Naive thymus-derived CD8-positive, alpha-beta T cell (primary cell): ENCODE measurements at regions of chr9 and their contacts with region 1.

Region 1: GRCh38 chr9:36487482-36488388 is 85.0 kb upstream of the MELK start:
- DNase-seq: peak; percentile 84 to 94 (median 90)
- ATAC-seq: peak; percentile 87 to 88
- H3K4me3 Mint-ChIP-seq: peak overlapping the region; percentile 85 to 98 (median 94)
- H3K27ac Mint-ChIP-seq: peak overlapping the region; percentile 96 to 100 (median 99)
- H3K4me1 Mint-ChIP-seq: peaks cover 37 to 75% (median 69%) of the 10 kb centered on the region in 4 donors
- H3K27me3 Mint-ChIP-seq: no peaks in the 10 kb centered on the region

Region 2: DNA sequence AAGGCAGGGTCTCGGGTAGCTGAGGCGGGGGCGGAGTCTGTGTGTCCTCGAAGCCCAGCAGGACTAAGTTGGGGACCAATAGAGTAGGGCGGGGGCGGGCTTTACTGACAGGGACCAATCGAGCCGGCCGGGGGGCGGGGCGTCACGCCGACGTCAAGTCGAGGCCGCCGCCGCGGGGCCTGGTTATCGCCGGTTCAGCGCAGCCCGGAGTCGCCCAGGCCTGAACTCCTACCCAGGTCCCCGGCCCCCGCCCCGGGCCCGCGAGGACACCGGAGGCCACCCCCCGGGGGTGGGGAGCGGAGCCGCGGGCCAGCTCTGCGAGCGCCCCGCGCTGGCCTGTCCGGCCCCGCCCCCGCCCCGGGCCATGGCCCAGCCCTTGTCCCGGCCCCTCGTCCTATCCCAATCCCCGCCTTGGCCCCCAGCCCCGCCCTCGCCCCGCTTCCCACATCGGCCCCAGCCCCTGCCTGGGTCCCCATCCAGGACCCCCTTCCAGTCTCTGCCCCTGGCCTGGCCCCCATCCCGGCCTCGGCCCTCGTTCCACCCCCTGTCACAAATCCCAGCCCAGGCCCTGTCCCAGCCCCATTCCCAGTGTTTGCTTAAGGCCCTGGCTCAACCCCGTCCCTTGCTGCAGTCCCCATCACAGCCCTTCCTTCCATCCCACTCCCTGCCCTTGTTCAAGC is 658.5 kb before region 1 on chr9 and contains the start of gene TMEM8B:
- POLR2A ChIA-PET with region 1: no interaction called
- DNase-seq: peak; percentile 83 to 97 (median 90)
- ATAC-seq: peak; percentile 94
- H3K4me3 Mint-ChIP-seq: peak within 1 kb of the TSS; percentile 86 to 100 (median 96)
- H3K27ac Mint-ChIP-seq: peak within 1 kb of the TSS; percentile 81 to 100 (median 96)
- H3K4me1 Mint-ChIP-seq: peaks cover 32 to 63% (median 44%) of the 10 kb centered on the region in 4 donors
- H3K27me3 Mint-ChIP-seq: no peaks in the 10 kb centered on the region
- polyA plus RNA-seq, gene TMEM8B: 1.5 to 2.4 (median 2.1) TPM

Region 3: GRCh38 chr9:36400332-36401163 is 87.2 kb before region 1 on chr9:
- POLR2A ChIA-PET with region 1: interaction called, 10 read pairs
- DNase-seq: peak; percentile 82 to 97 (median 92)
- ATAC-seq: peak; percentile 74 to 75
- H3K4me3 Mint-ChIP-seq: peak overlapping the region; percentile 88 to 99 (median 92)
- H3K27ac Mint-ChIP-seq: peak overlapping the region; percentile 90 to 100 (median 96)
- H3K4me1 Mint-ChIP-seq: peaks cover 20 to 57% (median 46%) of the 10 kb centered on the region in 4 donors
- H3K27me3 Mint-ChIP-seq: no peaks in the 10 kb centered on the region

Region 4: DNA sequence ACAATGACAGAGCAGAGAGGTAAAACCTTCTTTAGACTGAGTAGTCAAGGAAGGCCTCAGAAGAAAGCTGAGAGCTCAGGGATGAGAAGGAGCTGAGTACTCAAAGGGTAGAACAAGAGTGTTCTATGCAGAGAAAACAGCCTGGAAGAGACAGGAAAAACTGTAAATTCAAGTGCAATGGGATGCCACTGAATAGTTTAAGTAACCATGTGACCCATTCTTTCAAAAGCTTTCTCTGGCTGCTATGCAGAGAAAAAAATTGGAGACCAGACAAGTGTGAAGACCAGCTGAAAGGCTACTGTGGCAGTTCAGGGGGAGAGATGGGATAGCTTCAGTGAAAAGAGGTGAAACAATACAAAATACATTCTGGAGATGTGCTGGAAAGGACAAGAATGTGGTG is 26.4 kb before region 1 on chr9:
- POLR2A ChIA-PET with region 1: interaction called, 34 read pairs
- DNase-seq: no peak
- ATAC-seq: no peak
- H3K4me3 Mint-ChIP-seq: no peak overlapping the region
- H3K27ac Mint-ChIP-seq: peak overlapping the region; percentile 49 to 97 (median 72)
- H3K4me1 Mint-ChIP-seq: peaks cover 31 to 74% (median 69%) of the 10 kb centered on the region in 4 donors
- H3K27me3 Mint-ChIP-seq: no peaks in the 10 kb centered on the region

Region 5: DNA sequence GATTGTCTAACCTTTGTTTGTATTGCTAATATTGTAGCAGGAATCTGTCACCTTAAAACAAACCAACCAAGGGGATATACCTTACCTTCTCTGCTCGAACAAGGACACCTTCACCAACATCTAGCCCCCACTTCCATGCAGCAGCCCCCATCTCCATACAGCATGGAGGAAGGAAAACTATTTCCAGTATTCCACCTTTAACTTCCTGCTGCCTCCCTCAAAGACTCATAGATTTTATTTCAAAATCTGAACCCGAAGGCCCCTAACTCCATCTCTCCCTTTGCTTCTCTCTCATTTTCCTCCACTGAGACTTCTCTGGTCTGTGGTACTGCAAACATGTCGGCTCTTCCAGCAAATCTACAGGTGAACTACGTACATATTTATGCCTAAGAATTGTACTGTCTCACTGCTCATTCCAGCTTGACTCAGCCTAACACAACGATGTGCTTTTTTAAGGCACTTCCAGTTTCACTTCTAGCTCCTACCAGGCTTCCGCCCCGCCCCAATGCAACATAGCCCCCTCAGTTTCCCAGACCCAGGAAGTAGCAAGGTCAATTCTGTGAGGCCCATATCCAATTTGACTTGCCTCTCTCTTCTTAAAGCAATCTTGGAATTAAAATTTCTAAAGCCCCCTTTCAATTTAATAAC is 17.0 kb before region 1 on chr9:
- POLR2A ChIA-PET with region 1: interaction called, 22 read pairs
- DNase-seq: peak; percentile 37 to 71 (median 51)
- ATAC-seq: peak; percentile 93 to 95
- H3K4me3 Mint-ChIP-seq: peak overlapping the region; percentile 78 to 97 (median 90)
- H3K27ac Mint-ChIP-seq: peak overlapping the region; percentile 90 to 99 (median 96)
- H3K4me1 Mint-ChIP-seq: peaks cover 20 to 50% (median 42%) of the 10 kb centered on the region in 4 donors
- H3K27me3 Mint-ChIP-seq: no peaks in the 10 kb centered on the region

Region 6: DNA sequence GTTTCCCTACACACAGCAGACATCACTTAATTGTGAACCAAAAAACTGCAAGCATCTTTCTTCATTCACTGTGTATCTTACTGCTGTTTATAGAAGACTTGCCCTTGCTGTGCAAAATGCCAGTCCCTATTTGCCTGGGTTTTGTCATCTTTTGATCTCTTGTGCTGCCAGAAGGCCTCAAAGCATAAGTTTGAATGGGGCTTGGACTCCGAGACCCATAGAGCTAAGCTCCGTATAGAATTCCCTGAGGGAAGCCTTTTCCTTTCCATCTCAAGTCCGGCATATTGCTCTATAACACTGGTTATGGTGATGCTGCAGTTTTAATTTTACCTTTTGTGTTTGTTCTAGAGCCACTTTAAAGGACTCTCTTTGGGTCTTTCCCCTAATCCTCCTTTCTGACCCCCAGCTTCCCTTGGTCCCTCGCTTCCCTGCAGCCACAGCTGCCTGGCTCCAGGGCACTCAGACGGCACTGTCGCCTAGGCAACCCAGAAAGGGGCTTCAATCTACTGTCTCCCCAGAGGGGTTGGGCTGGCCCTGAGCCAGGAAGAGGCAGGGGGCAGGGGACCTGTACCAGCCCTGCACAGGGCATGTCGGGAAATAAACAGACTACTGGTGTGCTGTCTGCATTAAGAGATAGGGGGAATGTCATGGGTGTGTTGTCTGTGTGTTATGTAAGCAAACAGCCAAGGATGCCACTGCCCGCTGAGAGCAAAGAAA is 11.6 kb after region 1 on chr9:
- POLR2A ChIA-PET with region 1: interaction called, 58 read pairs
- DNase-seq: no peak
- ATAC-seq: no peak
- H3K4me3 Mint-ChIP-seq: no peak overlapping the region
- H3K27ac Mint-ChIP-seq: peak overlapping the region in 2 of 10 donors; percentile 46 to 50
- H3K4me1 Mint-ChIP-seq: peaks cover 15 to 57% (median 42%) of the 10 kb centered on the region in 4 donors
- H3K27me3 Mint-ChIP-seq: no peaks in the 10 kb centered on the region